ENCODE measurements at regions of chr9 and their contacts with region 1.

Region 1: GRCh38 chr9:122723690-122724089 is at the start of gene OR1L4:
- DNase-seq: no peak
- H3K4me3 ChIP-seq: no peak within 1 kb of the TSS
- H3K27ac ChIP-seq: no peak within 1 kb of the TSS
- H3K4me1 ChIP-seq: no peaks in the 10 kb centered on the region
- H3K27me3 ChIP-seq: no peaks in the 10 kb centered on the region
- CTCF ChIP-seq: no peak
- POLR2A ChIP-seq: no peak
- total RNA-seq, gene OR1L4: not detected in 2 replicates

Region 2: GRCh38 chr9:122580360-122580759 is 143.3 kb before region 1 on chr9:
- CTCF ChIA-PET with region 1: no interaction called
- POLR2A ChIA-PET with region 1: no interaction called
- dilution Hi-C with region 1: no loop called
- intact Hi-C with region 1: no loop called
- DNase-seq: peak; percentile 83
- H3K4me3 ChIP-seq: no peak overlapping the region
- H3K27ac ChIP-seq: no peak overlapping the region
- H3K4me1 ChIP-seq: peaks cover 8% of the 10 kb centered on the region
- H3K27me3 ChIP-seq: no peaks in the 10 kb centered on the region
- CTCF ChIP-seq: no peak
- POLR2A ChIP-seq: no peak

Region 3: DNA sequence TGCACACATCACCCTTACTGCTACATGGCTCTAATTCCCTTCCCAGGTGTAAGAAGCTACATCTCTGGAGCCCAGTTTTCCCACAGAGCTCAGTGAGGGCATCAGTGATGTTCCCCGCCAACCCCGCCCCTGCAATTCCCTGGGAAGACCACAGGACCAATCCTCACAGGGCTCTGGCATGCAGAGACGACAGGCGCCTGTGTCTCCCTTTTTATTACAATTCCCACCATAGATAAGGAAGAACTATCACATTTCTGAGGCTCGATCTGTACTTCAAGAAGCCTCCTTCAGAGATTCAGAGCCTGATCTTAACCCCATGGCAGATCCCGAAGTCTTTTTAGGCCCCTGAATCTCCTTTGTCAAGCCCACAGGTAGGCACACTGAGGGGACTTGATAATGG is 18.3 kb after region 1 on chr9 and contains the start of gene OR1L6:
- CTCF ChIA-PET with region 1: no interaction called
- POLR2A ChIA-PET with region 1: no interaction called
- dilution Hi-C with region 1: no loop called
- intact Hi-C with region 1: no loop called
- DNase-seq: no peak
- H3K4me3 ChIP-seq: no peak within 1 kb of the TSS
- H3K27ac ChIP-seq: no peak within 1 kb of the TSS
- H3K4me1 ChIP-seq: no peaks in the 10 kb centered on the region
- H3K27me3 ChIP-seq: peaks cover 0 to 8% of the 10 kb centered on the region in 2 experiments
- CTCF ChIP-seq: no peak
- POLR2A ChIP-seq: no peak
- total RNA-seq, gene OR1L6: not detected in 2 replicates

Region 4: DNA sequence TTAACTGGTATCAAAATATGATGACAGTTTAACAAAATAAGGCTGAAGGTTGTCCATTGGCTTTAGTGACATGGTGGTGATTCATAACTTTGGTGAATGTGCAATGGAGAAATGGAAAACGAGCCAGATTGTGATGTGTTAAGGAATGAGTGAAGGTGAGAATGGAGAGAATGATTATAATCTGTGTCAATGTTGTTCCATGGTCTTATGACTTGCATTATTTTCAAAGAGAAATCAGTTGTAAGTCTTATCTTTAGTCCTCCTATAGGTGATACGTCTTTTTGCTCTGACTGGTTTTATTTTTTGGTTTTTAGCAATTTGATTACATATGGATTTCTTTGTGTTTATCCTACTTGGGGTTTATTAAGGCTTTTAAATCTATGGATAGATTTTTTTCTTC is 31.1 kb after region 1 on chr9:
- CTCF ChIA-PET with region 1: no interaction called
- POLR2A ChIA-PET with region 1: no interaction called
- dilution Hi-C with region 1: no loop called
- intact Hi-C with region 1: loop called (anchors 1 kb)
- DNase-seq: no peak
- H3K4me3 ChIP-seq: no peak overlapping the region
- H3K27ac ChIP-seq: no peak overlapping the region
- H3K4me1 ChIP-seq: no peaks in the 10 kb centered on the region
- H3K27me3 ChIP-seq: no peaks in the 10 kb centered on the region
- CTCF ChIP-seq: no peak
- POLR2A ChIP-seq: no peak

Measured in endothelial cell of umbilical vein (primary cell).